ENCODE measurements at regions of chr2 and their contacts with region 1.

Region 1: DNA sequence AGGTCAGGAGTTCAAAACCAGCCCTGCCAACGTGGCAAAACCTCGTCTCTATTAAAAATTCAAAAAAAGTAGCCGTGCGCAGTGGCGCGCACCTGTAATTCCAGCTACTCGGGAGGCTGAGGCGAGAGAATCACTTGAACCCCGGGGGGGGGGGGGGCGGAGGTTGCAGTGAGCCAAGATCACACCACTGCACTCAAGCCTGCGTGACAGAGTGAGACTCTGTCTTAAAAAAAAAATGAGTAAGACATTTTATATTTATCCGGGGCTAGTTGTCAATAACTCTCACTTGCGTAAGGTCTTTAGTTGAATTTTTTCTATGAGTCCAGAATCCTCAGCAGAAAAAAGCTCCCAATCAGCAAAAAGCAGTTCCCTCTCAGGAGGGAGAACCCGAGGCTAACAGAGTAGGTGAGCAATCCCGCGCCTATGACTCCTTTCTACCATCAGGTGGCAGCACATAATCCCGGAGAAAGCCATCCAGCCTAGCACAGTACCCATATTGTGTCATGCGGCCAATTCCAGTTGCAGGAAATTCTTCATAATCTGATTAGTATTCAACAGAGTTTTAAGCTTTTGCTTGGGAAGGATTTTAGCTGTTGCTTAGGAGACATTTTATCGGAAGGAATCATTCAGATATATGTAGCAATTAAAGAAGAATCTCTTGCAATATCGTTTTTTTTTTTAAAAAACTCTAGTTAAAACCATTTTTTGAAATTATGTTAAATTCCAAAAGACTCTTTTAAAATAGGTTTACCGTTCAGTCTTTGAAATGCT is 11.9 kb upstream of the CRYGA start:
- DNase-seq: peak; percentile 71
- ATAC-seq: peak; percentile 100
- H3K4me3 ChIP-seq: peak overlapping the region in 1 of 2 experiments; percentile 23; a peak in 1 of 4 replicates
- H3K27ac ChIP-seq: no peak overlapping the region
- H3K4me1 ChIP-seq: no peaks in the 10 kb centered on the region
- H3K27me3 ChIP-seq: no peaks in the 10 kb centered on the region
- CTCF ChIP-seq: peak; percentile 93

Region 2: DNA sequence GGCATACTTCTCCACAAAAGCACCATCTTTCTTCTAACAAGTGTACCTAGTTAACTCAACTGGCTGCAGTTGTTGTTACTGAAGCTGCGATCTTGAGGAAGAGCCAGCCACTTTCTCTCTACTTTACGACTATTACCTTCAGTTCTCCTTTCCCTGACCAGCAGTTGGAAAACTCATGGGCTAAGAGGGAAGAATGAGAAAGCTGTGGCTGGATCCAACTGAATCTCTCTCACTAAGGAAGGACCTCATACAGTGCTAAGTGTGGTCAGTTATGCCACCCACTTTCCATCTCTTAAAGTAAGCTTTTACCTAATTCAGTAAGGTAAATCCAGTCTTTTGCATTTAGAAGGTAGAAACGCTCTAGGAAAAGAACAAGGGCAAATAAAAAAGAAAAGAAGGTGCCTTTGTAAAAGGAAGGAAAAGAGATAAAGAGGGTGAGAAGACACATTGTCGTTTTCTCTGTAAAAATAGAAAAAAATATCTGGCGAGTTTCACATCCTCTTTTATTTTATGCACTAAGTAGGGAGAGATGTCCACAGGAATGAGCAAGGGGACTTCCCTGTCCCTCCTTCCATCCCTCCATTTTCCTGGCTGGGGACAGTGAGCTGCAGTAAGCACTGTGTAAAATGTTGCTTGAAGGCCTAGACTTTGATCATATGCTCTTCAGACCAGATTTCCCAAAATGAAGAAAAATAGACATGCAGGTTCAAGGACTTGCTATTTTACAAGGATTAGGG is 223.4 kb before region 1 on chr2:
- CTCF ChIA-PET with region 1: no interaction called
- POLR2A ChIA-PET with region 1: no interaction called
- in situ Hi-C with region 1: no loop called
- intact Hi-C with region 1: no loop called
- DNase-seq: no peak
- ATAC-seq: no peak
- H3K4me3 ChIP-seq: no peak overlapping the region
- H3K27ac ChIP-seq: no peak overlapping the region
- H3K4me1 ChIP-seq: no peaks in the 10 kb centered on the region
- H3K27me3 ChIP-seq: no peaks in the 10 kb centered on the region; the same call in 1 of the 2 replicates
- CTCF ChIP-seq: no peak

Region 3: DNA sequence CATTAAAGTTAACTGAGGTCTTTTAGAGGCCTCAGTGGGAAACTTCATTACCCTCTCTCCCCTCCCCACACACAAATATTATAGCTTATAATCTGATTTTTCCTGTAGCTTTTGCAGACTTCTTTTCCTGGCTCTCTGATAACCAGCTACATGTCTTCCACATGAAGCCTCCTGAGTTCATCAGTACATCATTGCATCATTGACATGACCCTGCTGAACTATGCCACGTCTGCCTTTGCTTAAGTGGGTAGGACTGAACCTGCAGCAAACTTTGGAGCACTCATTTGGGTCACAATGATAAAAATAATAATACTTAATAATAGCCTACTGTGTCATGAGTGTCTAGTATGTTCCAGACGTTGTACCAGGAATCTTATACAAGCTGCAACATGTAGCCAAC is 18.8 kb before region 1 on chr2:
- CTCF ChIA-PET with region 1: interaction called, 4 read pairs
- POLR2A ChIA-PET with region 1: interaction called, 10 read pairs
- in situ Hi-C with region 1: no loop called
- intact Hi-C with region 1: no loop called
- DNase-seq: no peak
- ATAC-seq: no peak
- H3K4me3 ChIP-seq: no peak overlapping the region
- H3K27ac ChIP-seq: no peak overlapping the region
- H3K4me1 ChIP-seq: no peaks in the 10 kb centered on the region
- H3K27me3 ChIP-seq: no peaks in the 10 kb centered on the region
- CTCF ChIP-seq: no peak

Region 4: GRCh38 chr2:208254871-208255556 is 79.8 kb after region 1 on chr2 and contains the start of gene IDH1:
- CTCF ChIA-PET with region 1: interaction called, 24 read pairs
- POLR2A ChIA-PET with region 1: no interaction called
- in situ Hi-C with region 1: no loop called
- intact Hi-C with region 1: loop called (anchors 1 kb)
- DNase-seq: peak; percentile 71
- ATAC-seq: peak; percentile 89
- H3K4me3 ChIP-seq: peak within 1 kb of the TSS; percentile 100
- H3K27ac ChIP-seq: peak within 1 kb of the TSS; percentile 86
- H3K4me1 ChIP-seq: peaks cover 15% of the 10 kb centered on the region
- H3K27me3 ChIP-seq: no peaks in the 10 kb centered on the region
- CTCF ChIP-seq: peak; percentile 85
- total RNA-seq, gene IDH1: 80.2 TPM

Measured in Panc1 (cell line).